Ovary (tissue), 10 donors: ENCODE measurements at regions of chr1 and their contacts with region 1.

Region 1: DNA sequence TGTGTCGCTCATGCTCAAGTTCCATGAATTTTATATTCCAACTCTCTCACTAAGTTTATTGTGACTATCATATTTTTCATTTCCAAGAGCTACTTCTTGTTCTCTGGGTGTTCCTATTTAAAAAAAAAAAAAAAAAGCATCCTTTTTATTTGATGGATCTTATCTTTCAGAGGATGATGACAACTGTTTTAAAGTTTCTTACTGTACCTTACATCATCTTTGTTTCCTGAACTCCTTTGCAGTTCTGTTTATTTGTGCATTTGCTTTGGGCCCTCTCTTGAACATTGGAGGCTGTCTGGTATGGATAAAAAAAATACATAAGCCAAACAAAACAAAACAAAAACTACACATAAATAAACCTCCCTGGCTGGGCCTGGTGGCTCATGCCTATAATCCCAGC is 32.1 kb upstream of the FAM20B start:
- DNase-seq: no peak
- H3K4me3 ChIP-seq: no peak overlapping the region
- H3K27ac ChIP-seq: no peak overlapping the region
- H3K4me1 ChIP-seq: no peaks in the 10 kb centered on the region
- H3K27me3 ChIP-seq: no peaks in the 10 kb centered on the region
- CTCF ChIP-seq: no peak
- EP300 ChIP-seq: no peak
- POLR2A ChIP-seq: no peak

Region 2: DNA sequence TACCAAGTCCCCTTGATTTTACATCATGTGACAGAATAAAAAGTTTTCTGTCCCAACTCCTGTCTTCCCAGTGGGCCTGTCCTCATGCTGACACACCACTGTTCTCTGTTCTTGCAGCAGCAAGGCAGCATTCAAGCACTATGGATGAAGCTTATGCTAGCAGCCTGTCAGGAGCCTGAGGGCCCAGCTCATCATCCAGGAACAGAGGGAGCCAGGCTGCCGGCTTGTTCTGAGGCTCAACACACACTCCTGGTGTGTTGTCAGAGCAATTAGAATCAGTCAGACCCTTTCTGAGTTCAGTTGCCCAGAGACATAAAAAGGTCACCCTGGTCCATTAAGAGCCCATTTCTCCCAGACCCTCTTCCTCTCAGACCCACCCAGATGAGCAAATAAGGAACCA is 1306.6 kb before region 1 on chr1:
- intact Hi-C with region 1: no loop called
- DNase-seq: no peak
- H3K4me3 ChIP-seq: no peak overlapping the region
- H3K27ac ChIP-seq: no peak overlapping the region
- H3K4me1 ChIP-seq: no peaks in the 10 kb centered on the region
- H3K27me3 ChIP-seq: no peaks in the 10 kb centered on the region
- CTCF ChIP-seq: no peak
- EP300 ChIP-seq: no peak
- POLR2A ChIP-seq: no peak

Region 3: DNA sequence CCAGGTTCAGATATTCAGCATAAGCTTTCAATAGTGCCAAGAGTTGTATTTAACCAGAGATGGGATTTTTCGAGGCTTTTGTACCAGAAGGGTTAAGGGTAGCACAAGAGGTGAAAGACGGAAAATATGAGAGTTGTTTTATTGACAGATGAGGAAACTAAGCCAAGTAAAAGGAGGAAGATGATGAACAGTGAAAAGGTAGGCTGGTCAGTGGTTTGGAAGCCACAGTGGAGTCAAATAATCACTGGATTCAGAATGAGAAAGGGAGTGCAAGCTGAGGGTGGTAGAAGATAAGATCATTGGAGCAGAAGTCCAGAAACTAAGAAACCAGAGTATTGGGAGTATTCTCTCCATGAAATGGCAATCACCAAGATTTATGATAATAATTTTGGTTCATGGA is 168.4 kb before region 1 on chr1:
- intact Hi-C with region 1: loop called in 1 of 4 experiments (anchors 5 kb)
- DNase-seq: no peak
- H3K4me3 ChIP-seq: no peak overlapping the region
- H3K27ac ChIP-seq: no peak overlapping the region
- H3K4me1 ChIP-seq: no peaks in the 10 kb centered on the region
- H3K27me3 ChIP-seq: no peaks in the 10 kb centered on the region
- CTCF ChIP-seq: no peak
- EP300 ChIP-seq: no peak
- POLR2A ChIP-seq: no peak

Region 4: GRCh38 chr1:179016747-179017549 is 23.4 kb after region 1 on chr1:
- intact Hi-C with region 1: no loop called
- DNase-seq: peak; percentile 46 to 76 (median 60)
- H3K4me3 ChIP-seq: no peak overlapping the region
- H3K27ac ChIP-seq: no peak overlapping the region
- H3K4me1 ChIP-seq: peaks cover 12% of the 10 kb centered on the region
- H3K27me3 ChIP-seq: no peaks in the 10 kb centered on the region
- CTCF ChIP-seq: no peak
- EP300 ChIP-seq: no peak
- POLR2A ChIP-seq: no peak

Region 5: DNA sequence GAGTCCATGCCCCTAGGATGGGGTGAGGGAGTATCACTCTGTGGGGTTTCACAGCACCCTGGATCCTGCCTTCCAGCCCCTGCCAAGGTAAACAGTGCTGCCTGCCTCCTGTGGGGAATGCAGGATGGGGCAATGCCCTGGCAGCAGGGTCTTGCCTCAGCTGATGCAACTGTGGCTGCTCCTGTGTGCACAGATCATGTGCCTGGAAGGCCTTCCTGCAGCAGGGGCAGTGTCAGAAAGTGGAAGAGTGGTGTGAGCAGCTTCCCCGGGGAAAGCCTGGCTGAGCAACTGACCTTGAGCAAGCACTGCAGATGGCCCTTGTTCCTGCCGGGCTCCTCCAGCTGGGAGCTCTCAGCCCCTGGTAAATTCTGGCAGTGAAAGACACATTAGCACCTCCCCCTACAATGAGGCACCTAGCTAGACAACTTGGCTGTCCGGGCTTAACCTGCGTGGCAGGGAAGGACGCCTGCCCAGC is 98.2 kb after region 1 on chr1:
- intact Hi-C with region 1: no loop called
- DNase-seq: peak; percentile 74 to 87 (median 81)
- H3K4me3 ChIP-seq: no peak overlapping the region
- H3K27ac ChIP-seq: peak overlapping the region; percentile 51 to 67
- H3K4me1 ChIP-seq: peaks cover 16% of the 10 kb centered on the region
- H3K27me3 ChIP-seq: no peaks in the 10 kb centered on the region
- CTCF ChIP-seq: no peak
- EP300 ChIP-seq: no peak
- POLR2A ChIP-seq: no peak